ENCODE measurements at regions of chr7 and their contacts with region 1.

Region 1: DNA sequence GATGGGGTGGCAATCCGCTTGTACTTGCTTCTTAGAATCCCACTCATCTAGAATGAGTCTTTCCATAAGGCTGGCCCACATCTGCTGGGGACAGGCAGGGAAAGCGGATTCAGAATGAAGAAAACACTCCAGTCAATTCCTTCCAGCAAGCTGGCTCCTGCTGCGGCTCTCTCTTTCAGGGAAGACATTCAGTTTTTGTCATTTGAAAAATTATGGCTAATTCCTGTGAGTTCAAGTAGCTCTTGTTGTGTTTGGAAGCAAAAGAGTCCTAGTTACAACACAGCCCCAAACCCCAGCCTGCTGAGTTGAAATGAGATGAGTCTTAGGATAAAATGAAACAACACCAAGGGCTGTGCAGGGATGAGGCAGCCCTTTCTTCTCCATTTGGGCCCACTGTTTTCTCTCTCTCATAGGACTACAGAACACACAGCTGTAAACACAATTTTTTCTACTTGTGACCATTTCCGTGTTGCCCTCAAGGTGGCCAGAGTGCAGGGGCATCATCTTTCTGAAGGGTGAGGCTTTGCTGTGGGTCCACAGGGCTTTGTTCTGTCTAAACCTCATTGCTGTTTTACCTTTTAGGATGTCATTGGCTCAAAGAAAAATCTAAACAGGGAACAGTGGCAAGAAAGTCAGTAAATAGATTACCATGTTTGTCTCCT is 90.8 kb upstream of the EEPD1 start:
- DNase-seq: no peak
- ATAC-seq: peak; percentile 56; the same call in 2 of the 3 replicates
- H3K4me3 ChIP-seq: no peak overlapping the region
- H3K27ac ChIP-seq: no peak overlapping the region
- H3K4me1 ChIP-seq: no peaks in the 10 kb centered on the region
- H3K27me3 ChIP-seq: peaks cover 0 to 5% of the 10 kb centered on the region in 2 experiments; a peak in 1 of 5 replicates
- CTCF ChIP-seq: no peak
- EP300 ChIP-seq: no peak
- POLR2A ChIP-seq: no peak
- RAD21 ChIP-seq: no peak

Region 2: GRCh38 chr7:35906191-35906908 is 155.9 kb before region 1 on chr7:
- CTCF ChIA-PET with region 1: no interaction called
- POLR2A ChIA-PET with region 1: no interaction called
- in situ Hi-C with region 1: no loop called
- intact Hi-C with region 1: no loop called
- DNase-seq: peak; percentile 69
- ATAC-seq: peak; percentile 94
- H3K4me3 ChIP-seq: no peak overlapping the region
- H3K27ac ChIP-seq: no peak overlapping the region
- H3K4me1 ChIP-seq: no peaks in the 10 kb centered on the region
- H3K27me3 ChIP-seq: no peaks in the 10 kb centered on the region
- CTCF ChIP-seq: peak; percentile 91
- EP300 ChIP-seq: no peak
- POLR2A ChIP-seq: no peak
- RAD21 ChIP-seq: peak; percentile 79

Region 3: DNA sequence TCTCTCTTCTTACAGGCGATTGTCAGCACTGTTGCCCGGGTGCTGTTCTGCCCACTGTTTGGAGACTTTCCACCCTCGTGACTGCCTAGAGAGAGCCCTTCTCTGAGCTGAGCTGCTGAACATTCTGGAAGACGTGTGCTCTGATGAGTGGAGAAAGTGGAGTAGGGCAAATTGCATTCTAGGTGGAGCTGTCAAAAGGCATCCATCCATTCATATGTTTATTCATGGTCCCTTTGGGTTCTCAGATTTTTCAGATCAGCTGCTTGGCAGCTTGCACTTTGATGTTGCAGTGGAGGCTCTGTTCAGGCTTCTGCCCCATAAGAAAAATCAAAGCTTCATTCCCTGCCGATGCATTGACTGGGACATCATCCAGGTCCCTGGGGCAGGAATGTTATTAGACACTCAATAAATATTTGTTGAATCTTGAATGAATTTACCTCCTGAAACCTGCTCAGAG is 29.9 kb before region 1 on chr7:
- CTCF ChIA-PET with region 1: no interaction called
- POLR2A ChIA-PET with region 1: no interaction called
- in situ Hi-C with region 1: no loop called
- intact Hi-C with region 1: no loop called
- DNase-seq: no peak
- ATAC-seq: no peak
- H3K4me3 ChIP-seq: no peak overlapping the region
- H3K27ac ChIP-seq: no peak overlapping the region
- H3K4me1 ChIP-seq: no peaks in the 10 kb centered on the region
- H3K27me3 ChIP-seq: peaks cover 2 to 11% of the 10 kb centered on the region in 2 experiments; a peak in 4 of 5 replicates
- CTCF ChIP-seq: no peak
- EP300 ChIP-seq: no peak
- POLR2A ChIP-seq: no peak
- RAD21 ChIP-seq: no peak

Region 4: GRCh38 chr7:36598054-36598674 is 535.9 kb after region 1 on chr7:
- CTCF ChIA-PET with region 1: no interaction called
- POLR2A ChIA-PET with region 1: no interaction called
- in situ Hi-C with region 1: no loop called
- intact Hi-C with region 1: no loop called
- DNase-seq: no peak
- ATAC-seq: no peak
- H3K4me3 ChIP-seq: no peak overlapping the region
- H3K27ac ChIP-seq: no peak overlapping the region
- H3K4me1 ChIP-seq: no peaks in the 10 kb centered on the region
- H3K27me3 ChIP-seq: no peaks in the 10 kb centered on the region
- CTCF ChIP-seq: no peak
- EP300 ChIP-seq: no peak
- POLR2A ChIP-seq: no peak
- RAD21 ChIP-seq: no peak

Region 5: DNA sequence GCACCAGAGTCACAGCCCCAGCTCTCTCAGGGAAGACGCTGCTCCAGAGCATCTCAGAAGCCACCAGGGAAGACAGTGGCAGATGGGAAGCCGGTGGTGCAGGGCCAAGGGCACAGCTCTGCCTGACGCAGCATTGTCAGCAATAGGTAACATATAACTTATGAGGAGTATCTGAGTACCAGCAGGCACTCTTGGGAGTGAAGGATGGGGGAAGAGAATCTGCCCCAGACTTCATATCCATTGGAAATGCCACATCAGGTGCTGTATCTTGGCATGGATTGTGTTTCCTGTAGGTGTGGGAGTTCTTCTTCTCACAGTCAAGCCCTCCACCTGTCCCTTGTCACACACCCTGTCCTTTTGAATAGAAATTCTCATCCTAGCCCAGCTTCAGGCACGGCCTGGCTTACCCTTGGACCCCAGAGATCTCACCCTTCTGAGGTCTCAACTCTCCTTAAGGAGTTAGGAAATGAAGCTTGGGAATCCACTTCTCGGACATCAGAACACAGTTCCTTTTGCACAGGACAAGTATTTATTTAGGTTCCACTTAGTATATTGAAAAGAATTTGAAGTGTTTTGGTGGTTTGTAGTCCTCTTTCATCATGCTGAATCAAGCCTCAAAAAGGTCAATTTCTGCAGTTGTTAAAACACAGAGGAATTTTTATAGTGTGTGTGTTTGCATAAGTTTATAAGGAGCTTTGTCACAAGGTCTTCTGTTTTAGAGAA is 1868.1 kb after region 1 on chr7:
- CTCF ChIA-PET with region 1: no interaction called
- POLR2A ChIA-PET with region 1: no interaction called
- in situ Hi-C with region 1: no loop called
- intact Hi-C with region 1: loop called (anchors 5 kb)
- DNase-seq: no peak
- ATAC-seq: no peak
- H3K4me3 ChIP-seq: no peak overlapping the region
- H3K27ac ChIP-seq: no peak overlapping the region
- H3K4me1 ChIP-seq: peaks cover 29% of the 10 kb centered on the region
- H3K27me3 ChIP-seq: no peaks in the 10 kb centered on the region
- CTCF ChIP-seq: no peak
- EP300 ChIP-seq: no peak
- POLR2A ChIP-seq: no peak
- RAD21 ChIP-seq: no peak